Activated naive CD4-positive, alpha-beta T cell treated with anti-CD3 and anti-CD28 coated beads for 36 hours (primary cell): ENCODE measurements at regions of chr12 and their contacts with region 1.

Region 1: GRCh38 chr12:124713436-124714082 is 146.1 kb upstream of the NCOR2 start:
- DNase-seq: peak; percentile 92
- H3K4me3 Mint-ChIP-seq: peak overlapping the region; percentile 0
- H3K27ac Mint-ChIP-seq: peak overlapping the region; percentile 64
- H3K4me1 Mint-ChIP-seq: peaks cover 21% of the 10 kb centered on the region
- H3K27me3 Mint-ChIP-seq: no peaks in the 10 kb centered on the region

Region 2: GRCh38 chr12:124453419-124454351 is 259.9 kb before region 1 on chr12:
- CTCF ChIA-PET with region 1: no interaction called
- intact Hi-C with region 1: loop called (anchors 1 kb)
- DNase-seq: peak; percentile 93
- H3K4me3 Mint-ChIP-seq: no peak overlapping the region
- H3K27ac Mint-ChIP-seq: no peak overlapping the region
- H3K4me1 Mint-ChIP-seq: peaks cover 57% of the 10 kb centered on the region
- H3K27me3 Mint-ChIP-seq: no peaks in the 10 kb centered on the region

Region 3: GRCh38 chr12:124588751-124589267 is 124.8 kb before region 1 on chr12:
- CTCF ChIA-PET with region 1: no interaction called
- intact Hi-C with region 1: loop called (anchors 2 kb)
- DNase-seq: peak; percentile 74
- H3K4me3 Mint-ChIP-seq: no peak overlapping the region
- H3K27ac Mint-ChIP-seq: no peak overlapping the region
- H3K4me1 Mint-ChIP-seq: peaks cover 12% of the 10 kb centered on the region
- H3K27me3 Mint-ChIP-seq: no peaks in the 10 kb centered on the region

Region 4: GRCh38 chr12:124636138-124636978 is 77.2 kb before region 1 on chr12:
- CTCF ChIA-PET with region 1: no interaction called
- intact Hi-C with region 1: loop called (anchors 1 kb)
- DNase-seq: peak; percentile 89
- H3K4me3 Mint-ChIP-seq: no peak overlapping the region
- H3K27ac Mint-ChIP-seq: no peak overlapping the region
- H3K4me1 Mint-ChIP-seq: peaks cover 20% of the 10 kb centered on the region
- H3K27me3 Mint-ChIP-seq: no peaks in the 10 kb centered on the region

Region 5: DNA sequence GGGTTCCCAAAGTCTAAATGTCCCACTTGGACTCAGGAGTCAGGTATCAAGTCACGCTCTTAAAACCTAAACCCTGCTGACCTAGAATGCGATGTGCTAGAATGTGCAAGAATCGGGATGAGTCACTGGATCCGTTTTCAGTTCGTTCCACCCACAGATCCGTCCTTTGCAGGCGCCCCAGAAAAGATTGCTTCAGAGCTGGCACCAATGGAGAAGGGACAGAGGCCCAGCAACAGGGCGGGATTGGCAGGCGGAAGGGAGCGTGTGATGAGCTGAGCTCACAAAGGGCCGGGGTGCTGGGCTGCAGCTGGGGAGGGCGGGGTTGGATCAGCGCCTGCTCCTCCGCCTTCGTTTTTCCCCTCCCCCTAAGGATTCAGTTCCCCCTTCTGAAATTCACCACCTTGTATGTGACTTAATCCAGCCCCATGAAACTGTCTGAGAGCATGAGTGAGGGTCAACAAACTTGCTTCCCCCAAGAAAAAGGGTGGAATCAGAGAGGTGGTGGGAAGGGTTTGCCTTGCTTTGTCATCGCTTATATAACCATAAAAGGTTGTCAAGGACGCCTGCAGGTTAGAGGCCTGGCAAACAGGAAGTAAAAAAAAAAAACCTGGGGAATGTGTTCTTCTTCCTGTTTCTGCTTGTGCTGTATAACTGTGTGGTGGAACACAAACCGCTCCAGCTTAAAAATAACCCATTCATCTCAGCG is 203.7 kb after region 1 on chr12:
- CTCF ChIA-PET with region 1: no interaction called
- intact Hi-C with region 1: loop called (anchors 2 kb)
- DNase-seq: peak; percentile 98
- H3K4me3 Mint-ChIP-seq: peak overlapping the region; percentile 73
- H3K27ac Mint-ChIP-seq: peak overlapping the region; percentile 100
- H3K4me1 Mint-ChIP-seq: peaks cover 83% of the 10 kb centered on the region
- H3K27me3 Mint-ChIP-seq: peaks cover 6% of the 10 kb centered on the region